K562 (cell line): ENCODE measurements at regions of chr2 and their contacts with region 1.

Region 1: DNA sequence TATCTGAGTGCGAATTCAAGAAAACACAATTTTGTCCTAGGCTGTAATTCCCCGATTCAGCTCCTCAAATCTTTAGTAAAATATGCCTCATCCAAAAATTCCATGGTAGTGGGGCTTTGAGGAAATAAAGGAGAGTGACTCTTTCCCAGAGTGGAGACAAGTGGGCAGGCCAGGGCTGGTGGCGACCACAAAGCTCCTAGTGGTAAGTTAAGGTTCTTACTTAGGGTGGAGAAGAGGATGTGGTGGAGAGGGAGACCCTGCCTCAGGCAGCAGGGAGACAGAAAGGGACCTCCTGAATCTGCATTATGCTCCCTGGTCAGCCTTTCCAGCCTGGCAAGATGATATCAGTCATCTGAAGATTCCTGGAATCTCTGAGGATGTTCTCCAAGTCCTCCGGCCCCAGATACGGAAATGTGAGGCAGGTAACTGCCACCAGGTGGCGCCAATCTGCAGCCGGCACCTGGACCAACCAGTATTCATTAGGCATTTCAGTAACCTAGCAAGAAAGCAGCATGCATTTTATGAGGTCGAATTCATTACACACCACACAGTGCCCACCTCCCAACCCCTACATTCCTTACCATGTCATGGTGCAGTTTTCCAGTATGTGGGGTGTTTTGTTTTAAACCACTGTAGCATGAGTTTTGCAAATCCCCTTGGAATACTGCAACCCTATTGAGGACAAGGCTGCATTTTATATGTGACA is 106.4 kb downstream of the POLE4 start:
- DNase-seq: peak; percentile 63 to 68 (median 64)
- ATAC-seq: peak; percentile 94
- H3K4me3 ChIP-seq: no peak overlapping the region
- H3K27ac ChIP-seq: no peak overlapping the region
- H3K4me1 ChIP-seq: no peaks in the 10 kb centered on the region
- H3K27me3 ChIP-seq: peaks cover 0 to 10% of the 10 kb centered on the region in 2 experiments; a peak in 3 of 5 replicates
- CTCF ChIP-seq: peak; percentile 79 to 93 (median 86)
- EP300 ChIP-seq: no peak
- POLR2A ChIP-seq: no peak
- RAD21 ChIP-seq: peak; percentile 58 to 82

Region 2: GRCh38 chr2:75146606-75147332 is 81.9 kb after region 1 on chr2:
- CTCF ChIA-PET with region 1: no interaction called
- POLR2A ChIA-PET with region 1: no interaction called
- in situ Hi-C with region 1: no loop called
- intact Hi-C with region 1: loop called (anchors 5 kb)
- DNase-seq: no peak
- ATAC-seq: no peak
- H3K4me3 ChIP-seq: no peak overlapping the region
- H3K27ac ChIP-seq: no peak overlapping the region
- H3K4me1 ChIP-seq: no peaks in the 10 kb centered on the region
- H3K27me3 ChIP-seq: no peaks in the 10 kb centered on the region; a peak in 1 of 5 replicates
- CTCF ChIP-seq: no peak
- EP300 ChIP-seq: no peak
- POLR2A ChIP-seq: no peak
- RAD21 ChIP-seq: no peak

Region 3: GRCh38 chr2:75241696-75242095 is 176.9 kb after region 1 on chr2:
- CTCF ChIA-PET with region 1: interaction called, 7 read pairs
- POLR2A ChIA-PET with region 1: interaction called, 3 read pairs
- in situ Hi-C with region 1: no loop called
- intact Hi-C with region 1: loop called (anchors 1 kb)
- DNase-seq: peak in 2 of 4 experiments; percentile 12 to 27
- ATAC-seq: peak; percentile 76
- H3K4me3 ChIP-seq: no peak overlapping the region
- H3K27ac ChIP-seq: no peak overlapping the region
- H3K4me1 ChIP-seq: no peaks in the 10 kb centered on the region; a peak in 1 of 5 replicates
- H3K27me3 ChIP-seq: peaks cover 0 to 8% of the 10 kb centered on the region in 2 experiments; a peak in 3 of 5 replicates
- CTCF ChIP-seq: peak; percentile 57 to 81 (median 64)
- EP300 ChIP-seq: no peak
- POLR2A ChIP-seq: no peak
- RAD21 ChIP-seq: peak in 1 of 2 experiments; percentile 71; a peak in 3 of 4 replicates

Region 4: DNA sequence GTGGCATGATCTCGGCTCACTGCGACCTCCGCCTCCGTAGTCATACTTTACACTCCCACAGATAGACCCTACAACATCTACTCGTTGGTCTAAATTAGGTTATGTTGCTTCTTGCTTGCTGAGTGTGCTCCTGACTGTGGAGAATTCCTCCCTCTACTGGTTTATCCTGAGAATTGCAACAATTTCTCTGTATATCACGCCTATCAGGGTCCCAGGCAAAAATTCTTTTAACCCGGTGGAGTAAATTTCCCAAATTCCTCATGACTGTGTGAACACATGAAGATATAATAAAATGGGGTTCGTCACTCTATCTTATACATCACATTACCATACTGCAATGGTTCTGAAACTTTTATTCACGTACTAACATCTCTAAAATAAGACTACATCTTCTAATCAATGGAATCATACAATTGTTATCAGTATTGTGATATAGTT is 339.2 kb after region 1 on chr2:
- CTCF ChIA-PET with region 1: interaction called, 6 read pairs
- POLR2A ChIA-PET with region 1: no interaction called
- in situ Hi-C with region 1: no loop called
- intact Hi-C with region 1: loop called (anchors 2 kb)
- DNase-seq: peak; percentile 18 to 49 (median 30)
- ATAC-seq: peak; percentile 90
- H3K4me3 ChIP-seq: no peak overlapping the region
- H3K27ac ChIP-seq: no peak overlapping the region
- H3K4me1 ChIP-seq: no peaks in the 10 kb centered on the region
- H3K27me3 ChIP-seq: no peaks in the 10 kb centered on the region
- CTCF ChIP-seq: peak; percentile 65 to 81 (median 68)
- EP300 ChIP-seq: no peak
- POLR2A ChIP-seq: no peak
- RAD21 ChIP-seq: peak; percentile 76 to 77

Region 5: DNA sequence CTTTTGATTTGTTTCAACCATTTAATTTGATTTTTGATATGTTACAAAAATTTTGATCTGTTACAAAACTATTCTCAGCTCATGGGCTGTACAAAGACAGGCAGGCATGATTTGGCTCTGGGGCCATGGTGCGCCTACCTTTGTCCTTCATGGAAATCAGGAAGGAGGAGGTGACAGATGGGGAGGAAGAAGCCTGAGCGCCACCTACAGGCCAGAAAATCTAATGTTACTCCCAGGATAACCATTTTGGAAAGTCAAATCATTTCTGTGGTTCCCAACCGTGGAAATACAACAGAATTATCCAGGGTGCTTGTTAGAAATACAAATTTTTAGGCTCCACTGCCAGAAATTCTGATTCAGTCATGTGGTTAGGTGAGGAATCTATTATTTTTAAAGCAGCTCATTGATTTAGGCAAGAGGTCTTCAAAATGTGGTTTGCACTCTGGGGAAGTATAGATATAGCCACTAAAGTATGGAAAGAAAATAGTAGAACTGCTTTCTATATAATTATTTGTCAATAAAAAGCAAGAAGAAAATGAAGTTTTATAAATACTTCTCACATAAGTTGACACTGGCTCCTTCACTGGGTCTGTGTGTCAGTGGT is 402.0 kb after region 1 on chr2:
- CTCF ChIA-PET with region 1: no interaction called
- POLR2A ChIA-PET with region 1: no interaction called
- in situ Hi-C with region 1: no loop called
- intact Hi-C with region 1: loop called (anchors 5 kb)
- DNase-seq: peak; percentile 54 to 68 (median 66)
- ATAC-seq: peak; percentile 86
- H3K4me3 ChIP-seq: no peak overlapping the region
- H3K27ac ChIP-seq: no peak overlapping the region
- H3K4me1 ChIP-seq: no peaks in the 10 kb centered on the region
- H3K27me3 ChIP-seq: no peaks in the 10 kb centered on the region
- CTCF ChIP-seq: peak; percentile 56 to 77 (median 74)
- EP300 ChIP-seq: no peak
- POLR2A ChIP-seq: no peak
- RAD21 ChIP-seq: peak in 1 of 2 experiments; percentile 51; a peak in 3 of 4 replicates